SK-N-SH (cell line): ENCODE measurements at regions of chr12 and their contacts with region 1.

Region 1: GRCh38 chr12:13534645-13535398 is 338.3 kb downstream of the EMP1 start:
- DNase-seq: peak; percentile 39
- H3K4me3 ChIP-seq: peak overlapping the region in 1 of 2 experiments; percentile 44; a peak in 1 of 4 replicates
- H3K27ac ChIP-seq: no peak overlapping the region
- H3K4me1 ChIP-seq: no peaks in the 10 kb centered on the region
- H3K27me3 ChIP-seq: no peaks in the 10 kb centered on the region; the same call in 1 of the 2 replicates
- CTCF ChIP-seq: peak; percentile 92
- EP300 ChIP-seq: no peak
- RAD21 ChIP-seq: peak; percentile 72

Region 2: DNA sequence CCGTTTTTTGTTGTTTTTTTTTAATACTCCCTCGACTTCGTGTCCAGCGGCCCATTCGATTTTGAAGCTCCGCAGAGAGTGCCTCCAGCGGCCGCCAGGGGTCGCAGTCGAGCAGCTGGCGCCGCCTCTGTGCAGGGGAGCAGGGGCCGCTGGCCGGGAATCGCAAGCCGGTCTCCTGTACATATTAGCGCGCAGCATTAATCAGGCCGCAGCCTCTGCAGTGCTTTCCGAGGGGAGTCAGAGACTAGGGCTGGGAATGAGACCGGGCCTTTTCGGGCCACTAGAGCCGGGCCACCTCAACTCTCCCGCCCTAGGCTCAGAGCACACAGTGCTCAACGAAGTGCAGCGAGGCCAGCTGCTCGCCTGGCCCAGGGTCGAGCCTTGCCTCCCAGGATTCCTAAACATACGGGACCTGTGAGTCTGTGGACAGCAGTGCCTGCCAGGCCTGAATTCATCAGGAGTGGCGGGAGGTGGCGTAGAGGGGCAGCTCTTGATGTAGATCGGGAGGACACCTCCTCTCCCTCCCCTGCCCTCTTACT is 256.5 kb before region 1 on chr12:
- CTCF ChIA-PET with region 1: interaction called, 32 read pairs
- POLR2A ChIA-PET with region 1: no interaction called
- DNase-seq: peak; percentile 87
- H3K4me3 ChIP-seq: peak overlapping the region in 1 of 2 experiments; percentile 62; a peak in 1 of 4 replicates
- H3K27ac ChIP-seq: no peak overlapping the region
- H3K4me1 ChIP-seq: peaks cover 0 to 4% of the 10 kb centered on the region in 2 experiments; a peak in 1 of 4 replicates
- H3K27me3 ChIP-seq: peaks cover 47% of the 10 kb centered on the region; the same call in 1 of the 2 replicates
- CTCF ChIP-seq: peak; percentile 97
- EP300 ChIP-seq: no peak
- RAD21 ChIP-seq: peak; percentile 73

Region 3: GRCh38 chr12:13472690-13473089 is 62.1 kb before region 1 on chr12:
- CTCF ChIA-PET with region 1: interaction called, 10 read pairs
- POLR2A ChIA-PET with region 1: no interaction called
- DNase-seq: no peak
- H3K4me3 ChIP-seq: no peak overlapping the region
- H3K27ac ChIP-seq: no peak overlapping the region
- H3K4me1 ChIP-seq: no peaks in the 10 kb centered on the region
- H3K27me3 ChIP-seq: no peaks in the 10 kb centered on the region; the same call in 1 of the 2 replicates
- CTCF ChIP-seq: no peak
- EP300 ChIP-seq: no peak
- RAD21 ChIP-seq: no peak

Region 4: DNA sequence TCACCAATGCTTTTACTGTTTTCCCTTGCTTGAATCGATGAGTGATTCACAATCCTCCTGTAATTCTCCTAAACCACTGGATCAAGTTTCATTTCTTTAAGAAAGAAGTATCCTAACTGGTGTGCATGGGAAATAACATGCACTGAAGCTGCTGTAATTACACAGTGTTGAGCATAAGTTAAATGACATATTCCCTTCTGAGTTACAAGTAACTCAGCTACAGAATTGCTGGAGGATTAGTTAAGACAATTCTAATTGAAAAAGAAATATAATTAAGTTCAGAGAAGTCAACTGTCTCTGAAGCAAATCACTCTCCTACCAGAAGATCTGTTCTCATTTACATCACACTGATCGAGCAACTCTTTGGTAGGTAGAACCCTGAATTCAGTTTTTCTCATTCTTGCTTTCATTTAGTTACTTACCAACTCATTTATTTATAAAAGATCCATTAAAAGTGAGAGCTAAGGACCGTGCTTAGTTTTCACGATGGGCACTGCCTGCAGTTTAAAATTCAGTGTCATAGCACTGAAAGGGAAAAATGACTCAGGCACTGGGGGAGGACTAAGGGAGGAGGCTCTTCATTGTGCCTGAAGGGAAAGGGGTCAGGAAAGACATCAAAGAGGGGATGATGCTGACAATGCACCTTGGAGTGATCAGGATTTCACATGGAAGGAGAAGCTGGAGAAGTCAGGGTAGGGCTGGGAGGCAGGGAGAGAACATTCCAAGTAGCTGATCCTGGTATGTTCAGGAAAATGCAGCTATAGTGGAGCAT is 11.1 kb before region 1 on chr12:
- CTCF ChIA-PET with region 1: interaction called, 22 read pairs
- POLR2A ChIA-PET with region 1: no interaction called
- DNase-seq: no peak
- H3K4me3 ChIP-seq: no peak overlapping the region
- H3K27ac ChIP-seq: no peak overlapping the region
- H3K4me1 ChIP-seq: no peaks in the 10 kb centered on the region
- H3K27me3 ChIP-seq: no peaks in the 10 kb centered on the region
- CTCF ChIP-seq: no peak
- EP300 ChIP-seq: no peak
- RAD21 ChIP-seq: no peak

Region 5: DNA sequence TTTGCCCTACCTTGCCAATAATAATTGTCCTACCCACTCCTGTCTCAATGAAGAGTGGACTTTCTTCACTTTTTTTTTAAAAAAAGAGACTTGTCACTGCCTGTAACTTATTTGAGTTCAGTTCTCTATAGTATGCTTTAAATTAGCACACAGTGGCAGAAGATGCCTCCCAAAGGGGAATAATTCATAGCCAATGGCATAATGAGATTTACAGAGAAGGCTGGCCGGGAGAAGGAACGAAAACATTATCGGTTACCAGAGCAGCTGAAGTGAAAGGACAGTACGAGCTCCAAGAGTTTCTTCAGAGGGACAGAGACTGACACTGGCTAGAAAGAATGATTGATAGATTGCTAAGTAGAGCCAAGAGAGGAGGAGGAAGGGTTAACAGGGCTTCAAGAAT is 18.0 kb after region 1 on chr12:
- CTCF ChIA-PET with region 1: interaction called, 29 read pairs
- POLR2A ChIA-PET with region 1: no interaction called
- DNase-seq: no peak
- H3K4me3 ChIP-seq: no peak overlapping the region
- H3K27ac ChIP-seq: no peak overlapping the region
- H3K4me1 ChIP-seq: no peaks in the 10 kb centered on the region
- H3K27me3 ChIP-seq: no peaks in the 10 kb centered on the region
- CTCF ChIP-seq: no peak
- EP300 ChIP-seq: no peak
- RAD21 ChIP-seq: no peak

Region 6: DNA sequence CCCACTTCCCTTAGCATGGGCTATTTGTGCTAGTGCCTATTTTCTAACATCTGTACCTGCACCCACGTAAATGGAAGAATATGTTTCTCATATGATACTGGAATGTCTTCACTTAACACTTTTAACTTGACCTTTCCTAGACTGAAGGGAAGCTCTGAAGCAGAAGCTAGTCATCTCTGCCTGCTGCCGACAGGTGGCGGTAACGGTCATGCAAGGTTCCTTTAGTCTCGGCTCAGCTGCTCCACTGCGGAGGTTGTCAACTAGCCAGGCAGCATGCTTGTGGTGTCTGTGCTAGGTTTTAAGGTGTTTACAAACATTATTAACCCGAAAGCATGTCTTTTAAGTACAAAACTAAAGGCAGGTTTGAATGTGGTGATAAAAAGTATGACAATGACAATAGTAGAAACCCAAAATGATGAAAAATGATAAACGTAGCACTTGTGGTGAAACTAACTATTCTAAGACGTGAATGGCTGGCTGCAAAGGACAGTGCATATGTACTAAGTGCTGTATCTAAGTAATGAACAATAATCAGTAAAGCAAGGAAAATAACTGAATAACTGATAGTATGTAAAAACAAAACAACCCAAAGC is 329.4 kb after region 1 on chr12:
- CTCF ChIA-PET with region 1: no interaction called
- POLR2A ChIA-PET with region 1: no interaction called
- DNase-seq: peak; percentile 46
- H3K4me3 ChIP-seq: no peak overlapping the region; a peak in 1 of 4 replicates
- H3K27ac ChIP-seq: no peak overlapping the region
- H3K4me1 ChIP-seq: no peaks in the 10 kb centered on the region
- H3K27me3 ChIP-seq: peaks cover 12% of the 10 kb centered on the region
- CTCF ChIP-seq: peak; percentile 95
- EP300 ChIP-seq: no peak
- RAD21 ChIP-seq: peak; percentile 65